HepG2 (cell line): ENCODE measurements at regions of chr5 and their contacts with region 1.

Region 1: GRCh38 chr5:20524991-20525529 is 537.1 kb upstream of the CDH18 start:
- DNase-seq: no peak
- ATAC-seq: no peak
- H3K4me3 ChIP-seq: no peak overlapping the region
- H3K27ac ChIP-seq: no peak overlapping the region
- H3K4me1 ChIP-seq: no peaks in the 10 kb centered on the region
- H3K27me3 ChIP-seq: no peaks in the 10 kb centered on the region
- CTCF ChIP-seq: no peak
- EP300 ChIP-seq: no peak
- POLR2A ChIP-seq: no peak
- RAD21 ChIP-seq: no peak

Region 2: DNA sequence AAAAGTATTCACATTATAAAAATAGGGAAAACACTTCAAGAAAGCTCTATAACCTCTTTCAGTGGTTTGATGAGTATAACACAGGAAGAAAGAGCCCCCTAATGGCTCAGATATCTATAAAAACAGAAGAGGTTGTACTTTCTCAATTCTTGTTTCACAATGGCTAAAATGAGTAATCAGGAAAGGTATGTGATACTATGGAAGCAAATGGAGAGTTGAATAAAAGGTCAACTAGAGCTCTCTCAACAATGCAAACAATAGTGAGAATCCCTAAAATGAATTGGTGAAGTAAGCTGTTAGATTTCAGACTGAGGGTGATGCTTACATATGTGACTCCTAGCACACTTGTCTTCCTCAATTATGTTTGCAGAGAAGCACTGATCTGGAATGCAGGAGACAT is 47.6 kb after region 1 on chr5:
- CTCF ChIA-PET with region 1: no interaction called
- POLR2A ChIA-PET with region 1: no interaction called
- in situ Hi-C with region 1: no loop called
- intact Hi-C with region 1: loop called (anchors 1 kb)
- DNase-seq: no peak
- ATAC-seq: no peak
- H3K4me3 ChIP-seq: no peak overlapping the region
- H3K27ac ChIP-seq: no peak overlapping the region
- H3K4me1 ChIP-seq: no peaks in the 10 kb centered on the region
- H3K27me3 ChIP-seq: no peaks in the 10 kb centered on the region
- CTCF ChIP-seq: no peak
- EP300 ChIP-seq: no peak
- POLR2A ChIP-seq: no peak
- RAD21 ChIP-seq: no peak